ENCODE measurements at regions of chr9 and their contacts with region 1.

Region 1: DNA sequence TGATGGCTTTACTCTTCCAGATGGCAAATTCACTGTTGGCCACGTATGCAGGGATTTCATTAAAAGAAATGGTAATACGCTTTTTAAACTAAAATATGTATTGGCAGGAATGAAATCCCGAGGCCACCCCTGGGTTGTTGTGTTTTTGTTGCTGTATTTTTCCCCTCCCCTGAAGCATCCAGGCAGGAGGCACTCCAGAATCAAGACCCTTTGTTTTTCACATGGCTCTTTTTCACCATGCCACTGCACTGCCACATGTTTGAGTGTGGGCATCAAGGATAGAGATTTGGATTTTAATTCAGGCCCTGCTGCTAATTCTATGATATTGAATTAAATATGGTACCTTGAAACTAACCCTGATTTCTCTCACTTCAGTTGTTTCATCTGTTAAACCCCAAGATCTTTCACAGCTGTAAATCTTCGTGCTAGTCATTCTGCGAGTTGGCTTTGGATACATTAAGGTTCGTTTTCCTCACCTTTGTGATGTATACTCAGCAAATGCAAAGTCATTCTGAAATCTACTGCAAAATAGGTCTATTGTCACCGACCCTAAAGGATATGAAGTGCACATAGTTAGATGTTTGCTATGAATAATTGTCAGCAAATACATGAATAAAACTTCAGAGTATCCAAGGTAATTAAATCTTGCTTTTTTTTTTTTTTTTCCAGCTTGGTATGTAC is 533.4 kb downstream of the PTPRD start:
- DNase-seq: no peak
- ATAC-seq: no peak
- H3K4me3 ChIP-seq: no peak overlapping the region
- H3K27ac ChIP-seq: no peak overlapping the region
- H3K4me1 ChIP-seq: no peaks in the 10 kb centered on the region
- H3K27me3 ChIP-seq: no peaks in the 10 kb centered on the region
- CTCF ChIP-seq: no peak

Region 2: DNA sequence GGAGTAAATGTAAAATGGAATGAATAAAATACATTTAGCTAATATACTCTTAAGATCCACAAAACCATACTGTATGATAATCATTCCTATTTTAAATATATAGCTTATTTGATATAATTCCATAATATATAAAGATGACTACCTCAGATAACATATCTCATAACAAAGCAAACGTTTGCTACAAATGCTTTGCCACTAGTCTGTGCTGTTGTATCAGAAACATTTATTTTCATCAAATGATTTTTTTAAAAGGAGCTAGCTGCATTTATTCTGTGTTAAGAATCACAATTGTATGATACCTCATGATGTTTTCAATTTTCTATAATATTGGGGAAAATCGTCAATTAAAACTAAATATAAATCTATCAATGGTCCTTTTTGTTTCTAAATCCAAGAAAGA is 33.8 kb before region 1 on chr9:
- CTCF ChIA-PET with region 1: no interaction called
- POLR2A ChIA-PET with region 1: interaction called, 14 read pairs
- intact Hi-C with region 1: no loop called
- DNase-seq: peak; percentile 28
- ATAC-seq: peak; percentile 24; the same call in 1 of the 2 replicates
- H3K4me3 ChIP-seq: no peak overlapping the region
- H3K27ac ChIP-seq: no peak overlapping the region
- H3K4me1 ChIP-seq: no peaks in the 10 kb centered on the region
- H3K27me3 ChIP-seq: no peaks in the 10 kb centered on the region
- CTCF ChIP-seq: peak; percentile 42